ENCODE measurements at regions of chr4 and their contacts with region 1.

Region 1: GRCh38 chr4:108834835-108835384 is 72.1 kb upstream of the ETNPPL start:
- DNase-seq: peak in 2 of 4 experiments; percentile 20 to 44
- ATAC-seq: peak; percentile 91
- H3K4me3 ChIP-seq: no peak overlapping the region
- H3K27ac ChIP-seq: no peak overlapping the region
- H3K4me1 ChIP-seq: no peaks in the 10 kb centered on the region; a peak in 1 of 5 replicates
- H3K27me3 ChIP-seq: peaks cover 3 to 4% of the 10 kb centered on the region in 2 experiments; a peak in 3 of 5 replicates
- CTCF ChIP-seq: peak; percentile 57 to 89 (median 63); a peak in 4 of 6 replicates
- EP300 ChIP-seq: no peak
- POLR2A ChIP-seq: no peak
- RAD21 ChIP-seq: peak; percentile 95

Region 2: GRCh38 chr4:108917255-108917654 is 82.3 kb after region 1 on chr4:
- CTCF ChIA-PET with region 1: no interaction called
- POLR2A ChIA-PET with region 1: no interaction called
- in situ Hi-C with region 1: no loop called
- intact Hi-C with region 1: no loop called
- DNase-seq: no peak
- ATAC-seq: peak; percentile 47
- H3K4me3 ChIP-seq: no peak overlapping the region
- H3K27ac ChIP-seq: no peak overlapping the region
- H3K4me1 ChIP-seq: no peaks in the 10 kb centered on the region; a peak in 1 of 5 replicates
- H3K27me3 ChIP-seq: no peaks in the 10 kb centered on the region
- CTCF ChIP-seq: no peak
- EP300 ChIP-seq: no peak
- POLR2A ChIP-seq: no peak
- RAD21 ChIP-seq: no peak

Region 3: DNA sequence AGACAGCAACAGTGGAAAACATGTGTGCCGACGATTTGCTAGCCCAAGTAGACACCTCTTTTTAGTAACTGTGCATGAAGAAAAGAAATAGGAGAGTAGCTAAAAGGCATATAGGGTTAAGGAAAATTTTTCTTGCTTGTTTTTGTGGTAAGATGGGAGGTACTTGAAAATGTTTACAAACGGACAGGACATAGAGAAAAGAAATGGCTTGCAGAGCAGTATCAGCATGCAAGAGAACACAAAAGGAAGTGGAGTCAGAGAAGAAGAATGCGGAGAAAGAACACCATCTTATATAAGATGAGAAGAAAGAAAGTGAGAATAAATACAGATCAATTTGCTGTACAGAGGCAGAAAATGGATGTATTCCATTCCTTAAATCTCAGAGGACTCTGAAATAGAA is 191.7 kb after region 1 on chr4:
- CTCF ChIA-PET with region 1: no interaction called
- POLR2A ChIA-PET with region 1: no interaction called
- in situ Hi-C with region 1: no loop called
- intact Hi-C with region 1: loop called (anchors 10 kb)
- DNase-seq: peak in 1 of 4 experiments; percentile 13
- ATAC-seq: no peak; the same call in 1 of the 3 replicates
- H3K4me3 ChIP-seq: no peak overlapping the region
- H3K27ac ChIP-seq: peak overlapping the region; percentile 72
- H3K4me1 ChIP-seq: peaks cover 5 to 28% of the 10 kb centered on the region in 2 experiments
- H3K27me3 ChIP-seq: no peaks in the 10 kb centered on the region
- CTCF ChIP-seq: no peak
- EP300 ChIP-seq: no peak
- POLR2A ChIP-seq: no peak
- RAD21 ChIP-seq: no peak

Region 4: DNA sequence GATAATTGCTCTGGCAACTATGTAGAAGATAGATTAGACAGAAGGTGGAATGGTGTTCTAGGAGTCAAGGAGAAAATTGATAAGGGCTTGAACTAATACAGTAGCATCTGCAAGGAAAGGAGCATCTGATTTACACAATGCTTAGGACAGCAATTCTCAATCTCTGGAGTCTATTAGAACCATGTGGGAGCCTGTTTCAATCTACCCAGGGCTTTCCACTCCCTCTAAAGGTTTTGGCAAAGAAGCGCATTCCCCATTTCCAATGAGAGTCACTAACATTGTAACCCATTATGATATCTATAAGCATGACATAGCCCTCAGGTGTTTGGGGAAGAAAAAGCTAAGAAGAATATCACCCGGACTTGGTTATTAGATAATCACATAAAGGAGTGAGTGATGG is 299.4 kb after region 1 on chr4:
- CTCF ChIA-PET with region 1: no interaction called
- POLR2A ChIA-PET with region 1: no interaction called
- in situ Hi-C with region 1: no loop called
- intact Hi-C with region 1: loop called (anchors 10 kb)
- DNase-seq: no peak
- ATAC-seq: peak; percentile 59
- H3K4me3 ChIP-seq: no peak overlapping the region
- H3K27ac ChIP-seq: peak overlapping the region; percentile 51; the same call in 1 of the 3 replicates
- H3K4me1 ChIP-seq: peaks cover 8 to 26% of the 10 kb centered on the region in 2 experiments; a peak in 4 of 5 replicates
- H3K27me3 ChIP-seq: no peaks in the 10 kb centered on the region
- CTCF ChIP-seq: no peak
- EP300 ChIP-seq: no peak
- POLR2A ChIP-seq: no peak
- RAD21 ChIP-seq: no peak; a peak in 1 of 4 replicates

Region 5: GRCh38 chr4:109302361-109303139 is 467.6 kb after region 1 on chr4 and contains the start of gene COL25A1:
- CTCF ChIA-PET with region 1: interaction called, 13 read pairs
- POLR2A ChIA-PET with region 1: no interaction called
- in situ Hi-C with region 1: loop called (anchors 25 kb)
- intact Hi-C with region 1: loop called (anchors 1 kb)
- DNase-seq: no peak
- ATAC-seq: no peak
- H3K4me3 ChIP-seq: no peak within 1 kb of the TSS
- H3K27ac ChIP-seq: no peak within 1 kb of the TSS
- H3K4me1 ChIP-seq: no peaks in the 10 kb centered on the region; a peak in 1 of 5 replicates
- H3K27me3 ChIP-seq: no peaks in the 10 kb centered on the region; a peak in 1 of 5 replicates
- CTCF ChIP-seq: no peak
- EP300 ChIP-seq: no peak
- POLR2A ChIP-seq: no peak
- RAD21 ChIP-seq: no peak
- polyA plus RNA-seq, gene COL25A1: 0.07 to 0.17 TPM

Region 6: GRCh38 chr4:109406338-109406931 is 571.5 kb after region 1 on chr4:
- CTCF ChIA-PET with region 1: interaction called, 19 read pairs
- POLR2A ChIA-PET with region 1: no interaction called
- in situ Hi-C with region 1: loop called (anchors 5 kb)
- intact Hi-C with region 1: loop called (anchors 2 kb)
- DNase-seq: peak; percentile 36 to 67 (median 44)
- ATAC-seq: peak; percentile 93
- H3K4me3 ChIP-seq: no peak overlapping the region
- H3K27ac ChIP-seq: no peak overlapping the region
- H3K4me1 ChIP-seq: no peaks in the 10 kb centered on the region
- H3K27me3 ChIP-seq: peaks cover 0 to 9% of the 10 kb centered on the region in 2 experiments; a peak in 3 of 5 replicates
- CTCF ChIP-seq: peak; percentile 53 to 81 (median 67); a peak in 5 of 6 replicates
- EP300 ChIP-seq: no peak
- POLR2A ChIP-seq: no peak
- RAD21 ChIP-seq: peak; percentile 82 to 86